ENCODE measurements at regions of chr9 and their contacts with region 1.

Region 1: DNA sequence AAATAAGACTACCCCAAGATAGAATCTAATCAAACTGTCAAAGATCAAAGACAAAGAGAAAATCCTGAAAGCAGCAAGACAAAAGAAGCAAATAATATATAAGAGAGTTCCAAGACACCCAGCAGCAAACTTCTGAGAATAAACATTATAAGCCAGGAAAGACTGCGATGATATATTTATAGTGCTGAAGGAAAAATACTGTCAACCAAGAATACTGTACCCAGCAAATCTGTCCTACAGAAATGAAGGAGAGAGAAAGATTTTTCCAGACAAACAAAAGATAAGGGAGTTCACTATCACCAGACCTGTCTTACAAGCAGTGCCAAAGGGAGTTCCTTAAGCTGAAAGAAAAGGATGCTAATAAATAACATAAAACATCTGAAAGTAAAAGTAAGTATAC is 227.4 kb downstream of the DENND1A start:
- DNase-seq: no peak
- ATAC-seq: no peak
- H3K4me3 ChIP-seq: no peak overlapping the region
- H3K27ac ChIP-seq: no peak overlapping the region
- H3K4me1 ChIP-seq: peaks cover 0 to 8% (median 4%) of the 10 kb centered on the region in 9 donors
- H3K27me3 ChIP-seq: no peaks in the 10 kb centered on the region
- CTCF ChIP-seq: no peak

Region 2: DNA sequence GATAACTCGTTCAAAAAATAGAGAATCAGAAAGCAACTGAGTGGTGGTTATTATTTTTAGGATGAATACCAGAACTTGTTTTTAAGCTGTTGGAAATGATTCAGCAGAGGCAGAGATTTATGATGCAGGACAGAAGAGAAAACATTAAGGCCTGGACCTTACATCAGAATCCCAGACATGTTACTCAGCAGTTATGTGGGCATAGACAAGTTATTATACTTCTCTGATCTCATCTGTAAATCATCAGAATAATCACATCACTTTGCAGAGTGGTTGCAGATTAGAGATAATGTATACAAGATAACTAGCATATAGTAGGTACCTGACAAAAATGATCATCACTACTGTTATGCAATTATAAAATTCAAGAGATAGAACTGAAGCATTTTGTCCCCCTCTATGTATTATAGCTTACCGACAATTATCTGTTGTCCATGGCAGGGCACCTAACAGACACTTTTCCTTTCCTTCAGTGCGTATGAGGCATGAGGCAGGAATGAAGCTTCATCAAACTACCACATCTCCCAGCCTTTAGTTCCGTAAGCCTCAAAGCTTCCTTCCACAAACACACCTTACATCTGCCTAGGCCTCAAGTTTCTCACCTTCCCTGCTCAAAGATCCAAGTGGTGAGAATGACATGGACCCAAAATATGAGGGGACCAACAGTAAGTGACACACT is 61.6 kb after region 1 on chr9:
- intact Hi-C with region 1: loop called in 1 of 10 experiments (anchors 10 kb)
- DNase-seq: no peak
- ATAC-seq: no peak
- H3K4me3 ChIP-seq: no peak overlapping the region
- H3K27ac ChIP-seq: no peak overlapping the region
- H3K4me1 ChIP-seq: peaks cover 0 to 11% (median 5%) of the 10 kb centered on the region in 9 donors
- H3K27me3 ChIP-seq: no peaks in the 10 kb centered on the region
- CTCF ChIP-seq: no peak